ENCODE measurements at regions of chr7 and their contacts with region 1.

Region 1: GRCh38 chr7:135662373-135663114 is at the start of gene STMP1:
- DNase-seq: peak; percentile 90 to 95 (median 93)
- H3K4me3 ChIP-seq: peak within 1 kb of the TSS; percentile 64 to 92 (median 69)
- H3K4me3 Mint-ChIP-seq: peak within 1 kb of the TSS; percentile 87 to 95
- H3K27ac ChIP-seq: peak within 1 kb of the TSS; percentile 49 to 93
- H3K27ac Mint-ChIP-seq: peak within 1 kb of the TSS; percentile 89 to 98 (median 96)
- H3K4me1 ChIP-seq: peaks cover 42 to 47% of the 10 kb centered on the region in 2 donors
- H3K4me1 Mint-ChIP-seq: peaks cover 49% of the 10 kb centered on the region
- H3K27me3 ChIP-seq: no peaks in the 10 kb centered on the region
- H3K27me3 Mint-ChIP-seq: no peaks in the 10 kb centered on the region
- CTCF ChIP-seq: no peak
- polyA plus RNA-seq, gene STMP1: 20.4 to 108 (median 88.8) TPM

Region 2: DNA sequence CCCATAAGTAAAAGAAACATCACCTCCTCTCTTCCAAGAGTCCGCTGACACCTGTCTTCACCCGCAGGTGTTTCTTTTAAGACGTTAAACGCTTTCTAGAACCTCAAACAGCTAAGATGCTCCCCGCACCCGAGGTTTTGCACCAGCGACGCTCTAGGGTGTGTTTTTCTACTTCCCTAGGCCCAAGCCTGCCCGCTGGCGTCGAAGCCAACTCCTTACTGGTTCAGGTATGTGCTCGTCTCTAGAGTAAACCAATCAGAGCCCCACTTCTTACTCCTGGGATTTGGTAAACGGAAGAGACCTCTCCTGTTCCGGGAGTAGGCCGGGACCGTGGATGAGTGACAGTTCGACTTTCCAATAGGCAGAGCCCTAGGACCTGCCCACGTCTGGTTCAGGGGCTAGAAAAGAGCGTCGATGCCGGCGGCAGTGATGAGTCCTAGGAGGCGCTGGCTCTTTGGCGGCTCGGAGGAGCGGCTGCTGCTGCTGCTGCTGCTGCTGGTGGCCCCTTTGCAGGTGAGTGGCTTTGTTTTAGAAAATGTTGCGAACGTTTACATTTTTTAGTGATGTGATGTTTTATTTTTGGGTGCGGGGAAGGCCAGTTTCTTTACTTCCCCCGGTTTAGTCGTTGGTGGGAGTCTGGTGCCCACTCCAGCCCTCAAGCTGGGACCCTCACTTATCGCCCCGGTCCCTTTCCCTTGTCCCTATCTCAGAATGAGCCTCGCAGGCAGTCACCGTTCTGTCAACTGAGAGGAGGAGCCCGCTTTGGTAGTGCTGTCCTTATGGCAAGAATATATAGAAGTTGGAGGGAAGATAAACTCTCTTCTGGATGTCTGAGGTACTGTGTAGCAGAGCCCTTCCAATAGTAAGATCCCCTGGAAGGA is 1015.9 kb before region 1 on chr7 and contains the start of gene BPGM:
- intact Hi-C with region 1: loop called in 1 of 2 experiments (anchors 10 kb)
- DNase-seq: peak; percentile 99 to 100 (median 100)
- H3K4me3 ChIP-seq: peak within 1 kb of the TSS; percentile 67 to 89 (median 83)
- H3K4me3 Mint-ChIP-seq: no peak within 1 kb of the TSS
- H3K27ac ChIP-seq: peak within 1 kb of the TSS; percentile 26 to 94
- H3K27ac Mint-ChIP-seq: no peak within 1 kb of the TSS
- H3K4me1 ChIP-seq: peaks cover 15 to 21% of the 10 kb centered on the region in 2 donors
- H3K4me1 Mint-ChIP-seq: peaks cover 4% of the 10 kb centered on the region
- H3K27me3 ChIP-seq: no peaks in the 10 kb centered on the region
- H3K27me3 Mint-ChIP-seq: peaks cover 2 to 5% (median 3%) of the 10 kb centered on the region in 3 donors
- CTCF ChIP-seq: peak; percentile 12
- polyA plus RNA-seq, gene BPGM: 3.9 to 20.6 (median 18.4) TPM

Region 3: GRCh38 chr7:135193615-135194081 is 468.9 kb before region 1 on chr7:
- intact Hi-C with region 1: loop called in 1 of 2 experiments (anchors 5 kb)
- DNase-seq: no peak
- H3K4me3 ChIP-seq: no peak overlapping the region
- H3K4me3 Mint-ChIP-seq: no peak overlapping the region
- H3K27ac ChIP-seq: no peak overlapping the region
- H3K27ac Mint-ChIP-seq: peak overlapping the region in 4 of 7 donors; percentile 28 to 66 (median 41)
- H3K4me1 ChIP-seq: no peaks in the 10 kb centered on the region
- H3K4me1 Mint-ChIP-seq: no peaks in the 10 kb centered on the region
- H3K27me3 ChIP-seq: no peaks in the 10 kb centered on the region
- H3K27me3 Mint-ChIP-seq: no peaks in the 10 kb centered on the region
- CTCF ChIP-seq: no peak

Region 4: GRCh38 chr7:135509903-135510602 is 152.5 kb before region 1 on chr7 and contains the start of gene CNOT4:
- intact Hi-C with region 1: loop called (anchors 5 to 10 kb)
- DNase-seq: peak; percentile 95 to 97 (median 96)
- H3K4me3 ChIP-seq: peak within 1 kb of the TSS; percentile 82 to 99 (median 87)
- H3K4me3 Mint-ChIP-seq: no peak within 1 kb of the TSS
- H3K27ac ChIP-seq: peak within 1 kb of the TSS; percentile 91 to 98
- H3K27ac Mint-ChIP-seq: no peak within 1 kb of the TSS
- H3K4me1 ChIP-seq: peaks cover 21 to 31% of the 10 kb centered on the region in 2 donors
- H3K4me1 Mint-ChIP-seq: peaks cover 9% of the 10 kb centered on the region
- H3K27me3 ChIP-seq: no peaks in the 10 kb centered on the region
- H3K27me3 Mint-ChIP-seq: peaks cover 0 to 2% (median 0%) of the 10 kb centered on the region in 3 donors
- CTCF ChIP-seq: no peak
- polyA plus RNA-seq, gene CNOT4: 4.3 to 7.9 (median 6.3) TPM

Region 5: GRCh38 chr7:135558337-135558767 is 104.2 kb before region 1 on chr7:
- intact Hi-C with region 1: no loop called
- DNase-seq: peak; percentile 57 to 63 (median 59)
- H3K4me3 ChIP-seq: peak overlapping the region; percentile 80 to 96 (median 89)
- H3K4me3 Mint-ChIP-seq: no peak overlapping the region
- H3K27ac ChIP-seq: peak overlapping the region; percentile 84 to 98
- H3K27ac Mint-ChIP-seq: no peak overlapping the region
- H3K4me1 ChIP-seq: peaks cover 6 to 17% of the 10 kb centered on the region in 2 donors
- H3K4me1 Mint-ChIP-seq: peaks cover 25% of the 10 kb centered on the region
- H3K27me3 ChIP-seq: no peaks in the 10 kb centered on the region
- H3K27me3 Mint-ChIP-seq: no peaks in the 10 kb centered on the region
- CTCF ChIP-seq: peak; percentile 55

Region 6: GRCh38 chr7:135645296-135645904 is 17.1 kb before region 1 on chr7:
- intact Hi-C with region 1: no loop called
- DNase-seq: peak in 2 of 3 donors; percentile 27 to 46
- H3K4me3 ChIP-seq: no peak overlapping the region
- H3K4me3 Mint-ChIP-seq: no peak overlapping the region
- H3K27ac ChIP-seq: no peak overlapping the region
- H3K27ac Mint-ChIP-seq: peak overlapping the region in 1 of 7 donors; percentile 74
- H3K4me1 ChIP-seq: no peaks in the 10 kb centered on the region
- H3K4me1 Mint-ChIP-seq: no peaks in the 10 kb centered on the region
- H3K27me3 ChIP-seq: no peaks in the 10 kb centered on the region
- H3K27me3 Mint-ChIP-seq: no peaks in the 10 kb centered on the region
- CTCF ChIP-seq: peak; percentile 85

Measured in CD14-positive monocyte (primary cell).